ENCODE measurements at regions of chr6 and their contacts with region 1.

Region 1: GRCh38 chr6:17281100-17281494 is at the start of gene RBM24:
- DNase-seq: peak; percentile 42 to 66 (median 51)
- ATAC-seq: peak in 1 of 4 donors; percentile 2
- H3K4me3 ChIP-seq: peak within 1 kb of the TSS; percentile 65 to 87 (median 78)
- H3K27ac ChIP-seq: peak within 1 kb of the TSS; percentile 70 to 96 (median 90)
- H3K4me1 ChIP-seq: peaks cover 0 to 27% (median 3%) of the 10 kb centered on the region in 12 donors
- H3K27me3 ChIP-seq: peaks cover 0 to 42% (median 0%) of the 10 kb centered on the region in 9 donors
- CTCF ChIP-seq: peak in 5 of 12 donors; percentile 15 to 36 (median 24)
- POLR2A ChIP-seq: no peak
- total RNA-seq, gene RBM24: 107 to 263 (median 166) TPM

Region 2: DNA sequence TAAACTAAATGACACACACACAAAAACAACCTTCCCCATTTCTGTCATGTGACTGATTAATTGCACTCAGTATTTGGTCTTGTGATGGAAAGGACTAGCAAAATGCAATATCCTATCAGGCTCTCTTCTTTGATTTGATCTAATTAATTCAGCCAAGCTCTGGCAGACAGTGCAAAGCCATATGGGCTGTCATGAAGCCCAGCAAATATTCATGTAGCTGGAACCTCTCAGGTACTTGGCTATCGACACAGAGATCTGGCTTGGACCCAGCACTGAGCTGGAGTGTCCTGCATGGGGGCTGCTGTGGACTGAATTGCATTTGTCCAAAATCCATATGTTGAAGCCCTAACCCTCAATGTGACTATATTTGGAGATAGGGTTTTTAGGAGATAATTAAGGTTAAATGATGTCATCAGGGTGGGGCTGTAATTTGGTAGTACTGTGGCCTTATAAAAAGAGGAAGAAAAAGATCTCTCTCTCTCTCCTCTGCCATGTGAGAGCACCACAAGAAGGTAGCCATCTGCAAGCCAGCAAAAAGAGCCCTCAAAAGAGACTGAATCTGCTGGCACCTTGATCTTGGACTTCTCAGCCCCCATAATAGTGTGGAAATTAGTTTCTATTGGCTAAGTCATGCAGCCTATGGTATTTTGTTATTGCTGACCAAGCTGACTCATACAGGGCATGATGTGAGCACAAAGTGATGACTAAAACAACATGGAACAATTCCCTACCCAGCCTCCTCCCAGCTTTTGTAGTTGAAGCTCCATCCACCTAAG is 102.2 kb before region 1 on chr6:
- intact Hi-C with region 1: loop called in 1 of 10 experiments (anchors 10 kb)
- DNase-seq: no peak
- ATAC-seq: no peak
- H3K4me3 ChIP-seq: no peak overlapping the region
- H3K27ac ChIP-seq: no peak overlapping the region
- H3K4me1 ChIP-seq: peaks cover 0 to 3% (median 0%) of the 10 kb centered on the region in 12 donors
- H3K27me3 ChIP-seq: no peaks in the 10 kb centered on the region
- CTCF ChIP-seq: no peak
- POLR2A ChIP-seq: no peak

Region 3: GRCh38 chr6:17212546-17213371 is 68.3 kb before region 1 on chr6:
- intact Hi-C with region 1: loop called in 2 of 10 experiments (anchors 2 to 10 kb)
- DNase-seq: peak; percentile 41 to 72 (median 59)
- ATAC-seq: peak; percentile 76 to 89 (median 82)
- H3K4me3 ChIP-seq: peak overlapping the region in 1 of 12 donors; percentile 21
- H3K27ac ChIP-seq: peak overlapping the region in 11 of 12 donors; percentile 18 to 81 (median 68)
- H3K4me1 ChIP-seq: peaks cover 0 to 16% (median 2%) of the 10 kb centered on the region in 12 donors
- H3K27me3 ChIP-seq: no peaks in the 10 kb centered on the region
- CTCF ChIP-seq: no peak
- POLR2A ChIP-seq: no peak

Region 4: DNA sequence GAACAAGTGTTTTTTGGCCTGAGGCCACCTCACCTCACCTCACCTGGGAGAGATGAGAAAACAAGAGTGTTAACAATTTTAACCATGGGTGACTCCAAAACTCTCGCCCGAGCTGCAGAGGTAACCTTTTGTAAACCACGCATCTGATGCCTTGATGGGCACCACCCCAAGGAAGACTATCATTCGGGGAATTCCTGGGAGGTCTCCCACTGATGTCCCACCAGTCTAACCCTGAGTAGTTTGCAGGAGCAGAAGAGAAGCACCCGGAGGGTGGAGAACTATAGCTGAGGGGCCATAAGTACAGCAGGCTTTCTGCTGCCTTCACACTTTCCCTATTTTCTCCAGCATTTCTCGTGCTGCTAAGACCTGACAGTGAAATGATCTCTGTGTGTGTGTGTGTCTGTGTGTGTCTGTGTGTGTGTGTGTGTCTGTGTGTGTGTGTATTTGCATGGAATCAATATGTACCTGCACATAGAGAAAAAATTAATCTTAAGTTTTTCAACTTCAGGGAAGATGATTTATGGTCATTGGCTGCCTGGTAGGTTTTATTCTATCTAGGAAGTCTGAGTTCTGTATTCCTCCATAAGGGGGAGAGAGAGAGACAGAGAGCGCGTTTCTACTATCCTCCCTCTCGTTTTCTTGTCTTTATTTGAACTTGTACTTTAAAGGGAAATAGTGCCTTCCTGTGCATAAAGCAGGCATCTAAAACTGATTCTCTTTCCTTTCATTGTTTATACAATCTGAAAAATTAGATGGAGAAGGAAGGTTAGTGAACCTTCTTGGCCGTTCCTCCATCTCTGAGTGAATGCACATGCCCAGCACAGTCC is 188.1 kb after region 1 on chr6:
- intact Hi-C with region 1: loop called in 1 of 10 experiments (anchors 10 kb)
- DNase-seq: no peak
- ATAC-seq: no peak
- H3K4me3 ChIP-seq: no peak overlapping the region
- H3K27ac ChIP-seq: peak overlapping the region in 1 of 12 donors; percentile 81
- H3K4me1 ChIP-seq: peaks cover 0 to 27% (median 6%) of the 10 kb centered on the region in 12 donors
- H3K27me3 ChIP-seq: no peaks in the 10 kb centered on the region
- CTCF ChIP-seq: peak in 7 of 12 donors; percentile 27 to 45 (median 33)
- POLR2A ChIP-seq: no peak

Region 5: GRCh38 chr6:17584241-17584803 is 303.2 kb after region 1 on chr6:
- intact Hi-C with region 1: loop called in 6 of 10 experiments (anchors 5 to 10 kb)
- DNase-seq: peak in 2 of 5 donors; percentile 43 to 52
- ATAC-seq: peak; percentile 77 to 90 (median 86)
- H3K4me3 ChIP-seq: peak overlapping the region in 9 of 12 donors; percentile 12 to 48 (median 34)
- H3K27ac ChIP-seq: peak overlapping the region in 11 of 12 donors; percentile 22 to 78 (median 74)
- H3K4me1 ChIP-seq: peaks cover 0 to 20% (median 8%) of the 10 kb centered on the region in 12 donors
- H3K27me3 ChIP-seq: peaks cover 0 to 4% (median 0%) of the 10 kb centered on the region in 9 donors
- CTCF ChIP-seq: peak; percentile 59 to 92 (median 82)
- POLR2A ChIP-seq: no peak

Measured in heart left ventricle (tissue), 16 donors.